ENCODE measurements at regions of chr9 and their contacts with region 1.

Region 1: DNA sequence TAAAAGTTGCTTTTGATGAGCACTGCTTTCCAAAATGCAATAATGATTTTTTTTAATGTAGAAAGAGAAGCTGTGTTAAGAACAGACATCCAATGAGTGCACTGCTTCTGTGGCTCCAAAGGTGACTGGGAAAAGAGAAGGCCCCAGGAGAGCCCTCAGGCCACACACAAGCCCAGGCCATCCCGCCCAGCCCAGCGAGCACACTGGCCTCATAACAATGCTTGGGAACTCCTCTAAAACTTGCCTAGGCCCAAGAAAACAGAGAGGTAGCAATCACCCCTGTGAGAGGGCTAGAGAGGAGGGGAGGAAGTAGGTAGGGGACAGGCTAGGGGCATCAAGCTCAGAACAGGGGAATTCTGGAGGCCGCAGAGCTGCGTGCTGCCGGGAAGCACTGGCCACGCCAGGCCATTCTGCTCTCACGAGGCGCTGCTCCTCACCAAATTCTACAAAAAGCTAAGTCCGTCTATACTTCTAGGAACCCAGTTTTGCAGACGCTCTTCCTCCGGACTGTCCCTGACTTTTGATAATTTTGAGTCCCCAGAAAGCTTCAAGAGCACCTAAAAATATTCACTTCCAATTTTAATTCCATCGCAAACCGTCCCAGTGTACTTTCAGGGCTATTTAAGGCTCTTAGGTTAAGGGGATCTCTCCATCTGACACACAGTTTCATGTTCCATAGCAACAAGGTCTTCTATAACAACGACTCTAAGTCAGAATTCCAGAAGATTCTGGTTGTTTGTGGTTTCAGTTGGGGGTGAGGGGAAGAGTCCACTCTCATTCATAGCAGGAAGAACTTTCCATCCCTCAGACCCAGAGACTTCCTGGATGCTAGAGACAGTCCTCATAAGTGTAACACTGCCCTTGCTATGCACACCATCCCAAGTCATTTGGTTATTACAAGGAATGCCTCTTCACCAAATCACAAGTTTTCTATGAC is 51.0 kb downstream of the HABP4 start:
- DNase-seq: no peak
- H3K4me3 ChIP-seq: no peak overlapping the region
- H3K27ac ChIP-seq: no peak overlapping the region
- H3K4me1 ChIP-seq: no peaks in the 10 kb centered on the region
- H3K27me3 ChIP-seq: no peaks in the 10 kb centered on the region
- CTCF ChIP-seq: no peak

Region 2: GRCh38 chr9:96057155-96057554 is 443.8 kb before region 1 on chr9:
- CTCF ChIA-PET with region 1: no interaction called
- POLR2A ChIA-PET with region 1: no interaction called
- intact Hi-C with region 1: no loop called
- DNase-seq: no peak
- H3K4me3 ChIP-seq: no peak overlapping the region
- H3K27ac ChIP-seq: no peak overlapping the region
- H3K4me1 ChIP-seq: no peaks in the 10 kb centered on the region
- H3K27me3 ChIP-seq: no peaks in the 10 kb centered on the region
- CTCF ChIP-seq: no peak

Region 3: GRCh38 chr9:96667361-96667728 is 166.4 kb after region 1 on chr9:
- CTCF ChIA-PET with region 1: no interaction called
- POLR2A ChIA-PET with region 1: interaction called, 12 read pairs
- intact Hi-C with region 1: no loop called
- DNase-seq: no peak
- H3K4me3 ChIP-seq: no peak overlapping the region
- H3K27ac ChIP-seq: no peak overlapping the region
- H3K4me1 ChIP-seq: no peaks in the 10 kb centered on the region
- H3K27me3 ChIP-seq: no peaks in the 10 kb centered on the region
- CTCF ChIP-seq: no peak

Measured in A673 (cell line).